IMR-90 (cell line): ENCODE measurements at regions of chr20 and their contacts with region 1.

Region 1: DNA sequence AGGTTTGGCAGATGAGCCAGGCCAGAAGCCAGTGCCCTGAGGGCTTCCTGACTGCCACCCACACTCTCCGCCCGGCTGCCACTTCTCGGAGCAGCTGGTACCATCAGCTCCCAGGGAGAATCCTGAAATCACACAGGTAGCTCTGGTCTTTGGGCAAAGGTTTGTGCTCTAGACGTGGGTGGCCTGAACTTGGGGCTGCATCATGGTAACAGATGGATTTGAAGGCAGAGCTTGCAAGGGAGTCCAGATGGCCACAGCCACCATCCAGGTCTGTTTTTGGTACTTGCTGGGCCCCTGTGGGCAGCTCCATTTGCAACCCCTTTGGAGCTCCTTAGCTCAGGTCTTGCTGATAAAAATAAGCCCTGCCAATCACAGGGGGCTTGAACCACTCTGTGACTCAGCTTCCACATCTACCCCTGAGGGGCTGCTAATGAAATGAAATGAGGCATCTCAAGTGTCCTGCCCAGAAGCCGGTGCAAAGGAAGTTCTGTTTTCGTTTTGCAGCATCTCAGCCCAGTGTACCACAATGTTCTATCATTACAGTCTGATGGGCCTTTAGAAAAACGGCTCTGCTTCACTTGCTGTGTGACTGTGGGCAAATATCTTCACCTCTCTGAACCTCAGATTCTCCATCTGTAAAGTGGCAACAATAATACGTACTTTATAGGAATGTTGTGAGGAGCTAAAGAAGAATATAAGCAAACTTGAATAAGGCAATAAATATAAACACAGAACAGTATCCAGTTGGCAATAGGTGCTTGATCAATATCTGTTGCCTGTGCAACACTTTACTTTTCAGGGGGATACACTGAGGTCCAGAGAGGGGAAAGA is 25.1 kb upstream of the CDH22 start:
- DNase-seq: no peak
- ATAC-seq: no peak
- H3K4me3 ChIP-seq: no peak overlapping the region
- H3K27ac ChIP-seq: no peak overlapping the region
- H3K4me1 ChIP-seq: no peaks in the 10 kb centered on the region
- H3K27me3 ChIP-seq: peaks cover 68% of the 10 kb centered on the region
- CTCF ChIP-seq: no peak
- POLR2A ChIP-seq: no peak
- RAD21 ChIP-seq: no peak

Region 2: GRCh38 chr20:46028772-46029371 is 304.5 kb before region 1 on chr20 and contains the start of gene SLC12A5:
- CTCF ChIA-PET with region 1: no interaction called
- POLR2A ChIA-PET with region 1: interaction called, 13 read pairs
- dilution Hi-C with region 1: no loop called
- in situ Hi-C with region 1: no loop called
- intact Hi-C with region 1: no loop called
- DNase-seq: no peak
- ATAC-seq: no peak
- H3K4me3 ChIP-seq: no peak within 1 kb of the TSS
- H3K27ac ChIP-seq: no peak within 1 kb of the TSS
- H3K4me1 ChIP-seq: no peaks in the 10 kb centered on the region
- H3K27me3 ChIP-seq: peaks cover 60% of the 10 kb centered on the region
- CTCF ChIP-seq: no peak
- POLR2A ChIP-seq: no peak
- RAD21 ChIP-seq: no peak
- total RNA-seq, gene SLC12A5: not detected in 2 replicates

Region 3: DNA sequence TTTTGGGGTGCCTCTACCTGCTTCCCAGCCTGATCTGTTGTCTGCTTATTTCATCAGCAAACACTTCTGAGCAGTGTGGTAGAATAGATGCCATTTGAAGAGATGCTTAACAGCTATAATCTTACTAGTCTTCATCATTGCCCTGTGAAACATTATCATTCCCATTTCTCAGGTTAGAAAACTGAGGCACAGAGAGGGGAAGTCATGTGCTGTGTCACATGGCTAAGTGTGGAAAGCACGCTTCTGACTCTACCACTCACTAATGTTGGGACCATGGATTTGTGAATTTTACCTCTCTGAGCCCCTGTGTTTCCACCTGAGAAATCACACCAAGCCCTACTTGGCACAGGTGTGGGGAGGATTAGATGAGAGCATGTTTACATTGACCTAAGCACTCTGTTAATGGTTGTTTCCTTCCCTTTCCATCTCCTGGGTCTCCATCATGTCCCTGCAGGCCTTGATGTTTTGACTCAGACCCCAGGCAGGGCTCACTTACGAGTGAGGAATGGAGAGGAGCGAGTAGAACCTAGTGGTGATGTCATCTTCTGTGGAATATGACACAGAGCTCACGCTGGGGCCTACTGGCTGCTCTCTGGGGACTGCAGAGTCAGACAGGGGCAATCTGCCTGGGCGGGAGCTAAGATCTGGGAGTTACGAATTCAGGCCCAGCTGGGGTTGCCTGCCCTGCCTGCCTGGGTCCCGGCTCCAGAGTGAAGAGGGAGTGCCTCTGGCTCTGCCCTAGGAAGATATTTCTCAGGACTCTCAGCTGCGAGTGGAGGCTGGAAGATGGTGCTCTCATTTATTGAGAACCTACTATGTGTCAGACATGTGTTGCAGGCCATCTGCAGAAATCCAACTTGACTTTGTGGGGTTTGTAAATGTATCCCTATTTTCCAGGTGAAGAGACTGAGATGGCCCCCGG is 89.4 kb before region 1 on chr20:
- CTCF ChIA-PET with region 1: no interaction called
- POLR2A ChIA-PET with region 1: no interaction called
- dilution Hi-C with region 1: no loop called
- in situ Hi-C with region 1: no loop called
- intact Hi-C with region 1: no loop called
- DNase-seq: peak; percentile 4
- ATAC-seq: no peak
- H3K4me3 ChIP-seq: no peak overlapping the region
- H3K27ac ChIP-seq: no peak overlapping the region
- H3K4me1 ChIP-seq: no peaks in the 10 kb centered on the region
- H3K27me3 ChIP-seq: peaks cover 28% of the 10 kb centered on the region
- CTCF ChIP-seq: no peak
- POLR2A ChIP-seq: no peak
- RAD21 ChIP-seq: no peak